GM12878 (cell line): ENCODE measurements at regions of chr3 and their contacts with region 1.

Region 1: DNA sequence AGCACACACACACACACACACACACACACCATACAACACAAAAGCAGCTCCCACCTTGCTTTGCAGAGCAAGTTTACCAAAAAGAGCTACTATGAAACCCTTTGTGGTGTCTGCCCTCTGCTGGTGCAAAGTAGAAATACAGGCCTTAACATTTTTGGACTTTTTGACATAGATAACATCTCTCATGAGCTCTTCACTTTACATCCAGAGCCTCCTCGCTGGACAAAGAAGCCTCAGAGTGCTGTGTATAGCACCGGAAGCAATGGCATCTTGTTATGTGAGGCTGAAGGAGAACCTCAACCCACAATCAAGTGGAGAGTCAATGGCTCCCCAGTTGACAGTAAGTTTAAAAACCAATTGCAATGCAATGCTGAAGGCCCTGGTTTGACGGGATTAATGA is 157.9 kb downstream of the CHL1 start:
- DNase-seq: peak; percentile 60
- ATAC-seq: peak; percentile 87
- H3K4me3 ChIP-seq: no peak overlapping the region
- H3K27ac ChIP-seq: no peak overlapping the region
- H3K4me1 ChIP-seq: no peaks in the 10 kb centered on the region
- H3K27me3 ChIP-seq: no peaks in the 10 kb centered on the region
- CTCF ChIP-seq: peak; percentile 72 to 84 (median 76)
- EP300 ChIP-seq: no peak
- POLR2A ChIP-seq: no peak
- RAD21 ChIP-seq: peak; percentile 94

Region 2: DNA sequence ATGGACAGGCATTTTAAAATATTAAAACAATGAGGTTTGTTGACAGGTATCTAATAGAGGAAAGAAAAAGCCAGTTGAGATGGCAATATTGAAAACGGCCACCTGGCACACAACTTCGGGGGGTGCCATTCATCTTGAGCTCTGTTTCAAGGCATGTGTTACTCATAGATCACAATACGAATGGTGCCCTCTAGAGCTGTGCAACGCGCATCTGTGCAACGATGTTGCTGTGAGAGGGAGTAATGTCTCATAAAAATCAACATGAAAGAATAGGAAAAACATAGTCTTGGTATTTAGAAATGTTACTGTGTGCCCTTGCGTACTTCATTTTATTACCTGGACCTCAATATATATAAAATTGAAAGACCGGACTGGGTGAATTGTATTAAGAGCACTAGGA is 288.0 kb before region 1 on chr3:
- CTCF ChIA-PET with region 1: interaction called, 15 read pairs
- POLR2A ChIA-PET with region 1: no interaction called
- RAD21 ChIA-PET with region 1: interaction called, 6 read pairs
- SMC1A ChIA-PET with region 1: interaction called, 21 read pairs
- in situ Hi-C with region 1: no loop called
- intact Hi-C with region 1: no loop called
- DNase-seq: no peak
- ATAC-seq: no peak
- H3K4me3 ChIP-seq: no peak overlapping the region
- H3K27ac ChIP-seq: no peak overlapping the region
- H3K4me1 ChIP-seq: no peaks in the 10 kb centered on the region
- H3K27me3 ChIP-seq: no peaks in the 10 kb centered on the region
- CTCF ChIP-seq: no peak
- EP300 ChIP-seq: no peak
- POLR2A ChIP-seq: no peak
- RAD21 ChIP-seq: no peak

Region 3: DNA sequence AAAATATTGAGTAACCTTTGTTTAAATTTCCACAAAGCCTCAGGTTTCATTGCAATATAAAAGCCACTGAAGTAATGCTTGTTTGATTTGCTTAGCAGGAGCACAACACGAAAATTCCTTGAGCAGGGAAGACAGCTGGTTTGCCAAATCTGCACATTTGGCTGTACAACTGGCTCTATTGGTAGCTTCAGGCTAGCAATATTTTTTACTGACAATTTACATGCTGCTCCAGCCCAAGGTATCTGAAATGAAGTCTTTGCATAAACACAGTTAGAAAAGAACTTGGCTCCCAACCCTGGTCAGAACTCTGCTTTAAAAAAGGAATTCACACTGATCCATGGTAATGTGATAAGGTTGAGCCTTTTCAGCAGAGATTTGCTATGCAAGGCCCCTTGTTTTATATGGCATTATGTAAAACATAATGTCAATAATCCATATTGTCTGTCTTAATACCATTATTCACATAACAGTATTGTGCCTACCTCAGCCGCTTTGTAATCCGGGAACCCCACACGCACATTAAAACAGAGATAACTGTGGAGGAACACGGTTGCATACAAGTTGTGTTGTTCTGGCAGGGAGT is 213.6 kb before region 1 on chr3:
- CTCF ChIA-PET with region 1: interaction called, 12 read pairs
- POLR2A ChIA-PET with region 1: no interaction called
- RAD21 ChIA-PET with region 1: interaction called, 5 read pairs
- SMC1A ChIA-PET with region 1: interaction called, 7 read pairs
- in situ Hi-C with region 1: no loop called
- intact Hi-C with region 1: no loop called
- DNase-seq: no peak
- ATAC-seq: no peak
- H3K4me3 ChIP-seq: no peak overlapping the region
- H3K27ac ChIP-seq: no peak overlapping the region
- H3K4me1 ChIP-seq: no peaks in the 10 kb centered on the region
- H3K27me3 ChIP-seq: no peaks in the 10 kb centered on the region
- CTCF ChIP-seq: no peak
- EP300 ChIP-seq: no peak
- POLR2A ChIP-seq: no peak
- RAD21 ChIP-seq: no peak

Region 4: GRCh38 chr3:204102-204501 is 150.3 kb before region 1 on chr3:
- CTCF ChIA-PET with region 1: interaction called, 69 read pairs
- POLR2A ChIA-PET with region 1: no interaction called
- RAD21 ChIA-PET with region 1: interaction called, 58 read pairs
- SMC1A ChIA-PET with region 1: interaction called, 109 read pairs
- in situ Hi-C with region 1: no loop called
- intact Hi-C with region 1: loop called (anchors 5 kb)
- DNase-seq: no peak
- ATAC-seq: no peak
- H3K4me3 ChIP-seq: no peak overlapping the region
- H3K27ac ChIP-seq: no peak overlapping the region
- H3K4me1 ChIP-seq: no peaks in the 10 kb centered on the region
- H3K27me3 ChIP-seq: no peaks in the 10 kb centered on the region
- CTCF ChIP-seq: no peak
- EP300 ChIP-seq: no peak
- POLR2A ChIP-seq: no peak
- RAD21 ChIP-seq: no peak

Region 5: GRCh38 chr3:278300-279064 is 76.0 kb before region 1 on chr3:
- CTCF ChIA-PET with region 1: interaction called, 43 read pairs
- POLR2A ChIA-PET with region 1: interaction called, 5 read pairs
- RAD21 ChIA-PET with region 1: interaction called, 113 read pairs
- SMC1A ChIA-PET with region 1: interaction called, 69 read pairs
- in situ Hi-C with region 1: no loop called
- intact Hi-C with region 1: loop called (anchors 2 kb)
- DNase-seq: peak; percentile 89
- ATAC-seq: peak; percentile 87
- H3K4me3 ChIP-seq: peak overlapping the region; percentile 12
- H3K27ac ChIP-seq: peak overlapping the region; percentile 52; the same call in 1 of the 2 replicates
- H3K4me1 ChIP-seq: peaks cover 18% of the 10 kb centered on the region
- H3K27me3 ChIP-seq: no peaks in the 10 kb centered on the region
- CTCF ChIP-seq: no peak
- EP300 ChIP-seq: peak; percentile 91 to 92
- POLR2A ChIP-seq: no peak
- RAD21 ChIP-seq: no peak

Region 6: GRCh38 chr3:331881-332280 is 22.6 kb before region 1 on chr3:
- CTCF ChIA-PET with region 1: interaction called, 23 read pairs
- POLR2A ChIA-PET with region 1: no interaction called
- RAD21 ChIA-PET with region 1: interaction called, 26 read pairs
- SMC1A ChIA-PET with region 1: interaction called, 21 read pairs
- in situ Hi-C with region 1: no loop called
- intact Hi-C with region 1: no loop called
- DNase-seq: no peak
- ATAC-seq: no peak
- H3K4me3 ChIP-seq: no peak overlapping the region
- H3K27ac ChIP-seq: no peak overlapping the region
- H3K4me1 ChIP-seq: no peaks in the 10 kb centered on the region
- H3K27me3 ChIP-seq: no peaks in the 10 kb centered on the region; a peak in 1 of 4 replicates
- CTCF ChIP-seq: no peak
- EP300 ChIP-seq: no peak
- POLR2A ChIP-seq: no peak
- RAD21 ChIP-seq: no peak

Region 7: GRCh38 chr3:674116-674515 is 319.7 kb after region 1 on chr3:
- CTCF ChIA-PET with region 1: no interaction called
- POLR2A ChIA-PET with region 1: no interaction called
- RAD21 ChIA-PET with region 1: no interaction called
- SMC1A ChIA-PET with region 1: no interaction called
- in situ Hi-C with region 1: no loop called
- intact Hi-C with region 1: no loop called
- DNase-seq: no peak
- ATAC-seq: no peak
- H3K4me3 ChIP-seq: no peak overlapping the region
- H3K27ac ChIP-seq: no peak overlapping the region
- H3K4me1 ChIP-seq: no peaks in the 10 kb centered on the region
- H3K27me3 ChIP-seq: no peaks in the 10 kb centered on the region
- CTCF ChIP-seq: no peak
- EP300 ChIP-seq: no peak
- POLR2A ChIP-seq: no peak
- RAD21 ChIP-seq: no peak